Activated T-helper 2 cell treated with anti-CD3 and anti-CD28 coated beads, Interferon-gamma antibody, Interleukin-2, Interleukin-4, amounts not matched to agents 10 μg/mL and 5 μg/mL and 100 μg/mL, durations not matched to agents 14 hours and 24 hours and 36 hours (primary cell): ENCODE measurements at regions of chr4 and their contacts with region 1.

Region 1: DNA sequence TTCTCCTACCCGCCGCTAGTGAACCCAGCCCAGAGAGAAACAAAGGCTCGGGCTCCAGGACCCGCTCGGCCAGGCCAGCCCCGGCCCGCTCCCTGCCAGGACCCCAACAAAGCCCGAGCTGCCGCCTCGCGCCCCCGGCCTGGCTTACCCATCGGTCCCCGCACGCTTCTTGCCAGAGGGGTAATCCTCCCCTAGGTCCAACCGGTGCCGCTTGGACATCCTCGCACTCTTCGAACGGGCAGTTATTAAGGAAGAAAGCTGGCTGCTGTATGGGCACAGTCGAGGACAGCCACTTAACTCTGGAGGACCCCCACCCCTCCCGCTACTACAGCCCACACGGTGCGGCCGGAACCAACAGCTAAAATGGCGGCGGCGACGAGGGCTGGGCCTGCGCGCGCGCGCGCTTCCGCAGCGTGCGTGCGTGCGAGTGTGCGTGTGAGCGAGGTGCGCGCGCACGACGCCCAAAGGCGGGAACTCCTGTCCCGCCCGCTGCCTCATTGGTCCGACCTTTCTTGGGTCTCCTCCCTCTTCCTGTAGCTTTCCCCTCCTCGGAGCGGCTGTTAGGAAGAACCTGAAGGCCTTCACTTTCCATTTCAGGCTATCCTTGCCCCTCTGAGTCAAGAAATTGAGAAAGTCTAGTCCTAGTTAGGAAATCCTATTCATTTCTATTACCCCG is at the start of gene DHX15:
- DNase-seq: peak; percentile 89
- H3K4me3 Mint-ChIP-seq: peak within 1 kb of the TSS; percentile 99
- H3K27ac Mint-ChIP-seq: peak within 1 kb of the TSS; percentile 99
- H3K4me1 Mint-ChIP-seq: peaks cover 22% of the 10 kb centered on the region
- H3K27me3 Mint-ChIP-seq: no peaks in the 10 kb centered on the region
- total RNA-seq, gene DHX15: 233 and 239 TPM in 2 replicates

Region 2: DNA sequence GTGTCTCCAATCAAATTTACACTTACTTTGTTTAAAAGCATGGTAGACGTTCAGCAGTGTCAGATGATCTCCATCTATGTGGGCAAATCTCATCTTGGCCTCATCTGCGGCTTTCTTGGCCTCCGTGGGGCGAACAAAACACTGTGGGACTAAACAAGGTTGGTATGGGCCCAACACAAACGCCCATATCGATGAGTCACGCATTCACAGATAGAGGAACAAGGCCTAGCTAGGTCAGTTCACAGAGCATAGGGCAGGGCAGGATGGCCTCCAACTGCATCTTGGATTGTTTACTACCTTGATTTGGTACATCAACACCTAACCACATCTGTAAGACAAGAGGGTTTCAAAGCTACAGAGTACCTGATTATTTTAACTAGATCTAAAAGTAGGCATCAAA is 47.3 kb before region 1 on chr4:
- intact Hi-C with region 1: loop called (anchors 2 kb)
- DNase-seq: no peak
- H3K4me3 Mint-ChIP-seq: no peak overlapping the region
- H3K27ac Mint-ChIP-seq: no peak overlapping the region
- H3K4me1 Mint-ChIP-seq: peaks cover 29% of the 10 kb centered on the region
- H3K27me3 Mint-ChIP-seq: no peaks in the 10 kb centered on the region

Region 3: DNA sequence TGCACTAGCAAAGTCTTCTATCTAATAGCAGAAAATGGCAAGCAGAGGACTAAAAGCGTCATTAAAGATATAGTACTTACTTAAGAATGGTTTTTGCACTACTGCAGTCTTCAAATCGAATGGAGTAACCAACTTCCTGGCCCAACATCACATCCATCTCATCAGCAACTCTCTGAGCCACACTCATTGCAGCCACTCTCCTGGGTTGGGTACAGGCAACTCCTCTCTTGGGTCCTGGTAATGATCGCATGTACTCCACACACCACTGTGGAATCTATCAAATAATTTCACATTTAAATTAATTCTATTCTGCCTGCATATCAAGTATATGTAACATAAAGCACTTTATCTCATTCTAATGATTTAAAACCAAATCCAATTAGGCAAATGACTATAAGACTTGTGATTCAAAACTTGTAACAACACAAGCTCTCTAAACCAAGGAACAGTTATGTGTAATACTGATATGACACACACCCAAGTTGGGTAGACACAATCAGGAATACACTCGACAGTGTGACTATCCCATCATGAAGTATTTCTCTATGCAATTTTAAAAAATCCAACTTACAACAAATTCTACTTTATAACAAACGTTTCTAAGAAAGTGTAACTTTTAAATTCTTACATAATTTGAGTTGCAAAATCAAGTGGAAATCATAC is 13.6 kb before region 1 on chr4:
- intact Hi-C with region 1: loop called (anchors 1 kb)
- DNase-seq: no peak
- H3K4me3 Mint-ChIP-seq: no peak overlapping the region
- H3K27ac Mint-ChIP-seq: peak overlapping the region; percentile 28
- H3K4me1 Mint-ChIP-seq: peaks cover 55% of the 10 kb centered on the region
- H3K27me3 Mint-ChIP-seq: no peaks in the 10 kb centered on the region

Region 4: GRCh38 chr4:25234390-25235370 is 650.4 kb after region 1 on chr4:
- intact Hi-C with region 1: loop called (anchors 10 kb)
- DNase-seq: peak; percentile 40
- H3K4me3 Mint-ChIP-seq: peak overlapping the region; percentile 95
- H3K27ac Mint-ChIP-seq: peak overlapping the region; percentile 98
- H3K4me1 Mint-ChIP-seq: peaks cover 35% of the 10 kb centered on the region
- H3K27me3 Mint-ChIP-seq: no peaks in the 10 kb centered on the region

Region 5: GRCh38 chr4:25376754-25377571 is 792.6 kb after region 1 on chr4 and contains the start of gene ANAPC4:
- intact Hi-C with region 1: loop called (anchors 2 kb)
- DNase-seq: peak; percentile 93
- H3K4me3 Mint-ChIP-seq: no peak within 1 kb of the TSS
- H3K27ac Mint-ChIP-seq: peak within 1 kb of the TSS; percentile 89
- H3K4me1 Mint-ChIP-seq: peaks cover 4% of the 10 kb centered on the region
- H3K27me3 Mint-ChIP-seq: no peaks in the 10 kb centered on the region
- total RNA-seq, gene ANAPC4: 39.5 and 40.9 TPM in 2 replicates